PC-3 (cell line): ENCODE measurements at regions of chr7 and their contacts with region 1.

Region 1: GRCh38 chr7:45923290-45923689 is 2.2 kb upstream of the IGFBP3 start:
- DNase-seq: peak; percentile 83
- ATAC-seq: peak; percentile 28
- H3K4me3 ChIP-seq: peak overlapping the region; percentile 80
- H3K27ac ChIP-seq: peak overlapping the region; percentile 55
- H3K4me1 ChIP-seq: peaks cover 47% of the 10 kb centered on the region
- H3K27me3 ChIP-seq: no peaks in the 10 kb centered on the region
- CTCF ChIP-seq: peak; percentile 97

Region 2: DNA sequence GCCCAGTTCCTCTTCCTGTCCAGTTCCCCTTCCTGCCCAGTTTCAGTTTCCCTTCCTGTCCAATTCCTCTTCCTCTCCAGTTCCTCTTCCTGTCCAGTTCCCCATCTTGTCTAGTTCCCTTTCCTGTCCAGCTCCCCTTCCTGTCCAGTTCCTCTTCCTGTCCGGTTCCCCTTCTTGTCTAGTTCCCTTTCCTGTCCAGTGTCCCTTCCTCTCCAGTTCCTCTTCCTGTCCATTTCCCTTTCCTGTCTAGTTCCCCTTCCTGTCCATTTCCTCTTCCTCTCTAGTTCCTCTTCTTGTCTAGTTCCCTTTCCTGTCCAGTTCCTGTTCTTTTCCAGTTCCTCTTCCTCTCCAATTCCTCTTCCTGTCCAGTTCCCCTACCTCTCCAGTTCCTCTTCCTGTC is 417.2 kb before region 1 on chr7:
- CTCF ChIA-PET with region 1: no interaction called
- POLR2A ChIA-PET with region 1: no interaction called
- intact Hi-C with region 1: no loop called
- DNase-seq: no peak
- ATAC-seq: no peak
- H3K4me3 ChIP-seq: no peak overlapping the region
- H3K27ac ChIP-seq: no peak overlapping the region
- H3K4me1 ChIP-seq: no peaks in the 10 kb centered on the region
- H3K27me3 ChIP-seq: no peaks in the 10 kb centered on the region
- CTCF ChIP-seq: no peak

Region 3: DNA sequence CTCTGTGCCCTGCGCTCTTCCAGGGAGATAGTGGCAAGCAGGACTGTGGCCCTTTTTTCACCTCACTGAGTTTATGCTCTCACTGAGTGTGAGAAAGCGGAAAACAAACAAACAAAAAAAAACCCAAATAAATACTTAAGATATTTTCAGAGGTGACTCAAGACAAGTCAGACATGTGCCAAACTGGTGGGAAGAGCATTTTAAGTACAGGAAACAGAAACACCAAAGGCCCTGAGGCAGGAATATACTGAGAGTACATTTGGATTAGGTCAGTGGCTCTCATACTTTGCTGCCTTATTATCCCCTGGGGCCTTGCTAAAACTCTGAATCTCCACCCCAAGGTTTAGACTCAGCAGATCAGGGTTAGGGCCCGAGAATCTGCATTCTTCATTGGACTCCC is 109.7 kb after region 1 on chr7:
- CTCF ChIA-PET with region 1: no interaction called
- POLR2A ChIA-PET with region 1: no interaction called
- intact Hi-C with region 1: loop called (anchors 2 kb)
- DNase-seq: peak; percentile 91
- ATAC-seq: peak; percentile 72
- H3K4me3 ChIP-seq: no peak overlapping the region
- H3K27ac ChIP-seq: peak overlapping the region; percentile 95
- H3K4me1 ChIP-seq: peaks cover 37% of the 10 kb centered on the region
- H3K27me3 ChIP-seq: no peaks in the 10 kb centered on the region
- CTCF ChIP-seq: no peak

Region 4: GRCh38 chr7:46153951-46154787 is 230.9 kb after region 1 on chr7:
- CTCF ChIA-PET with region 1: interaction called, 3 read pairs
- POLR2A ChIA-PET with region 1: interaction called, 4 read pairs
- intact Hi-C with region 1: loop called (anchors 5 kb)
- DNase-seq: peak; percentile 74
- ATAC-seq: peak; percentile 71
- H3K4me3 ChIP-seq: no peak overlapping the region
- H3K27ac ChIP-seq: peak overlapping the region; percentile 69
- H3K4me1 ChIP-seq: peaks cover 13% of the 10 kb centered on the region
- H3K27me3 ChIP-seq: no peaks in the 10 kb centered on the region
- CTCF ChIP-seq: no peak

Region 5: GRCh38 chr7:46486256-46487206 is 563.2 kb after region 1 on chr7:
- CTCF ChIA-PET with region 1: no interaction called
- POLR2A ChIA-PET with region 1: no interaction called
- intact Hi-C with region 1: loop called (anchors 2 kb)
- DNase-seq: peak; percentile 80
- ATAC-seq: peak; percentile 82
- H3K4me3 ChIP-seq: peak overlapping the region; percentile 7; the same call in 1 of the 2 replicates
- H3K27ac ChIP-seq: peak overlapping the region; percentile 88
- H3K4me1 ChIP-seq: peaks cover 39% of the 10 kb centered on the region
- H3K27me3 ChIP-seq: no peaks in the 10 kb centered on the region
- CTCF ChIP-seq: no peak

Region 6: GRCh38 chr7:47179812-47180515 is 1256.7 kb after region 1 on chr7:
- CTCF ChIA-PET with region 1: no interaction called
- POLR2A ChIA-PET with region 1: no interaction called
- intact Hi-C with region 1: loop called (anchors 1 kb)
- DNase-seq: peak; percentile 73
- ATAC-seq: peak; percentile 97
- H3K4me3 ChIP-seq: no peak overlapping the region
- H3K27ac ChIP-seq: no peak overlapping the region
- H3K4me1 ChIP-seq: no peaks in the 10 kb centered on the region
- H3K27me3 ChIP-seq: 0 out of 2 replicates have a peak, but pooled peaks cover 5% of the 10 kb centered on the region
- CTCF ChIP-seq: peak; percentile 85